GM13977 (cell line): ENCODE measurements at regions of chr6 and their contacts with region 1.

Region 1: GRCh38 chr6:31834434-31835198 is 7.1 kb downstream of the HSPA1B start:
- DNase-seq: peak; percentile 87
- CTCF ChIP-seq: no peak

Region 2: DNA sequence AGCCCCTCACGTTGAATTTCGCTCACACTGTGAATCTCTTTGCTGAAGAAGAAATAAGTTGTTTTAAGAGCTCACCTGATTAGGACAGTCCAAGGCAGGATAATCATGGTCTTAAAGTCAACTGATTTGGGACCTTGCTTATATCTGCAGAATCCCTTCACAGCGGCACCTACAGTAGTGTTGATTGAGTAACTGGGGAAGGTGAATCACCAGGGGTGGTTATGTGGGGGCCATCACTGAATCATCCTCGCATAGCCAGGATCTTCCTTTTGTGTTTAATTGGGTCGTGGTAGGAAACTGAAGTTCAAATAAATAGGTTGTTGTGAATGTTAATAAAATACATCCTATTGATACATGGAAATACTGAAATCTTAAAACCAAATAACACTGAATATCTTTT is 451.5 kb before region 1 on chr6:
- in situ Hi-C with region 1: no loop called
- DNase-seq: no peak
- CTCF ChIP-seq: no peak

Region 3: DNA sequence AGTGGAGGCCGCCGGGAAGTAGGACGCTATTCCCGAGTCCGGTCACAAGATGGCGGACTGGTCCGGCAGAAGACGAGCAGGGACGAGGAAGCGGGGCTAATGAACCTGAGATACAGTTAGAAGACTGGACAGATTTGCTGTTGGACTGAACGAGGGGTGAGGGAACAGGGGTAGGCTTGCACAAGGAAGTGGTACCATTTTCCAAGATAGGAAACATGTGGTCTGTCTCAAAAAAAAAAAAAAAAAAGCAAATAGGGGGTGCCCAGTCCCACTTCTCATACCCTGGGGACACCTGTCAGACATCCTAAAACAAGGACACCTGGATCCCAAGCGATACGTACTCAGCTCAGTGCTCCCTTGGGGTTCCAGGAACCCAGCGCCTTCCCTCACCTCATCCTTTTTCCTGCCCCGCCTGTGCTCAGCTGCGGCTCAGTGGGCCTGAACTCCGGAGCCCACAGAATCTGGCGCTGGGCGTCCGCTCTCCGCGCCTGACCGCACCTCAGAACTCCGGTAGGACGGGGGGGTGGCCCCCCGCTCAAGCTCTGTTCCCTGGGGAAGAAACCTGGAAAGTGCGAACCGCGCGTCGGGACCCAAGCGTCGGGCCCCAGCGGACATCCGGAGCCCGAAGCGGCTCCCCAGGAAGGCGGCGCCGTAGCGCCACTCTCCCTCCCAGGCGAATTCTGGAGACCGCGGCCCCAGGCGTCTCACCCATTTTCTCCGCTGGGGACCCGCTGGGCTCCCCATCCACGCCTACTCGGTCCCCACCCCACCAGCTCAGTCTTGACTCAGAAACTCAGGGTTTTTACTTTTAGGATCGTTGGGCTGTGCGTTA is 153.6 kb before region 1 on chr6 and contains the start of gene LY6G5C:
- in situ Hi-C with region 1: loop called (anchors 5 kb)
- DNase-seq: peak; percentile 81
- CTCF ChIP-seq: peak; percentile 89

Region 4: DNA sequence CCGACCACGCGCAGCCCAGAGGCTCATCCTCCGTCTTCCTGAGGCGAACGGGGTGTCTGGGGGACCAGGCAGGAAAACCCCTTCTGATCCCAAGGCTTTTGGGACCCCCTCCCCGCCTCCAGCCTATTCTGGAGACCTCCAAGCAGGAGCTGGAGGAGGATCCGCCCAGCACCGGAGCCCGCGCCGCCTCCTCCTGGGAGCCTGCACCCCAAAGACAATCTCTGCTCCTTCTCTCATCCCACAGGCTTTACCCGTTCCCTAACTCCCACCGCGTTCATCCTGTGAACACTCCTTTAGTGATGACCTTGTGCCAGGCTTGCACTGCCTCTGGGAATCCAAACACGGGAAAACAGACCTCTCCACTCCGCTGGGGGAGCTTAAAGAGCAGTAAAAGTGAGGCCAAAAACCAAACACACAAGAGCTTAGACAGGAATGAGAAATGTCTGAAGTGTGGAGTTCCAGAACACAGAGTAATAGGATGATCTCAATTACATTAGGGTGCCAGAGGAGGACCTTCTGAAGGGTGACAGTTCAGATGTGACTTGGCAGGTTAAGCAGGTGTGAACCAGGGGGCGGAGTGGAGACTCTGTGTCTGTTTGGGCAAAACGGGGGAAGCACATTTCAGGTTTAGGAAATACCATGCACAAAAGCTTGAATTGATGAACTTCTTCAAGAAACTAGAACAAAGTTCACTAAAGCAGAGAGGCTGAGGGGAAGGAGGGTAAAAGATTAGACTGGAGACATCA is 687.9 kb after region 1 on chr6:
- in situ Hi-C with region 1: no loop called
- DNase-seq: no peak
- CTCF ChIP-seq: no peak